Aorta (tissue), 5 donors: ENCODE measurements at regions of chrX and their contacts with region 1.

Region 1: DNA sequence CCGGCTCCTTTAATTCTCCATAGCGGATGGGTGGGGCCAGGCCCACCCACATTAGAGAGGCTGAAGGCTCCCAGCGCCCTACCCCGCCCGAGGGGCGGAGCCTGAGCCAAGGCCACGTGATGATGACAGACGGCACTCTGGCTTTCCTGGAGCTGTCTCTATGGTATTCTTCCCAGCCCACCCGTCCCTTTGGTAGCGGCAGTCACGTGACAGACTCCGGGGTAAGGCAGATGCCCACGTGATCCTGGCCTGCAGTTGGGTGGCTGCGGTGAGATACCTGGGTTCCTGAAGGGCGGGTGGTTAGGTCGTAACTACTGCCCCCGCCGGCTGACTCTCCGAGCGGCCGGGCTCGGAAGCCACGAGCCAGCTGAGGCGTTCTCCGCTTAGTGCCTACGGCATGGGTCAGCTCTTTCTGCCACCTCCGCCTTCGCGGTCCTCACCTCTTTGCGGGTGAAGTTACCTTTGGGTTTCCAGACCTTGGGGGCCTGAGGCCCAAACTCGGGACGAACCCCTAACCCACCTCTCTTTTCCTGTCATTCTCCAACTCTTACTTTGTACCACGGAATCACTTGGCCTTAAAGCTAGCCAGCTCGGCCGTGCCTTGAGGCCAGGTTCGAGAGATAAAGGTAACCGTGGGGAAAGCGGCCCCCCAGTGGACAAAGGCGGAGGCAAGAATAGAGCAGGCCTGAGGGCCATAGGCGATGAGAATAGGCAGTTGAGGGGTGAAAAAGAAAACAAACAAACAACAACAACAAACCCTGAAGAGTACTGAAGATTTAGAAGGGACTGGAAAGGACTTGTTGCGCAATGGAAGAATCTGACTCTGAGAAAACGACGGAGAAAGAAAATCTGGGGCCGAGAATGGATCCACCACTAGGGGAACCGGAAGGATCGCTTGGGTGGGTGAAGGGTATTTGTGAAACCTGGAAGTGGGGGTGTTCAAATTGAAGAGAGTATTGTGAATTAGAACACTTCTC is at the start of gene RRAGB:
- DNase-seq: peak; percentile 95 to 96
- ATAC-seq: peak; percentile 99
- H3K4me3 ChIP-seq: peak within 1 kb of the TSS; percentile 9 to 39
- H3K27ac ChIP-seq: peak within 1 kb of the TSS in 1 of 2 donors; percentile 58
- H3K4me1 ChIP-seq: peaks cover 0 to 3% of the 10 kb centered on the region in 2 donors
- H3K27me3 ChIP-seq: no peaks in the 10 kb centered on the region
- total RNA-seq, gene RRAGB: 17.2 to 26.2 TPM

Region 2: DNA sequence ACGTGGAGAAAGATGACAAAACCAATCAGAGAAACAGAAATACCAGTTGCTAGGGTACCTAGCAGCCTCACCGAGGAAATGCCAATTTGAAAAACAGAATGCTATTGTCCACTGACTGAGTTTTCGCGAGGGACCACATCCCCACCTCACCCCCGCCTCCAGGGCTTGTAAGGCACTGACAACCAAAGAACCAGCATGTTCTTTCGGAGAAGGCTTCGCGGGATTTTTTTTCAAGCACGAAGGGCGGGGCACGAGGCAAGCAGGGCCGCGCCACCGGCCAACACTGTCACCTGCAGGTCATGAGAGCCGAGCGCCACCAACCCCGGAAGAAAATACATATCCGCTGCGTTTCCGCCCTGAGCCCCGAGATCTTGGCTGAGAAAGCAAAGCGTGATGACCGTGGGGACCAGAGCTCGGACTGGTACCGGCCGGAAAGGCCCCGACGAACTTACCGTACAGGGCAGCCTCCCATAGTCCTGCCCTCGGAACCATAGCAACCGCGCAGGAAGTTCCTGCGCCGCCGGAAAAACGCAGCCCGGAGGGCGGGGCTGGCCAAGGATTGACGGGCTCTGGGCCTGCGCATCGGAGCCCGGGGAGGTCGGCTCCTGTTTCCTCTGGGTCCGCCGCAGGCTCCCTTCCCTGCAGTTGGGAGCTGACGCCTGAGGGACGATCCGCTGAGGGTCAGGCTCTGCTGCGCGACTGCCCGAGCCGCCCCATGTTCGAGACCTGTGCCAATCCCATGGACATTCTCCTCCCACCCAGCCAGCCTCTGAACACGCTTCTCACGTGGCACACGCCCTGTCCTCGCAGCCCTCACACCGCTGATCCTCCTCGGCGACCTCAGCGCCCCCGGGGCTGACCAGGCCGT is 556.9 kb before region 1 on chrX:
- intact Hi-C with region 1: loop called in 1 of 2 experiments (anchors 10 kb)
- DNase-seq: peak; percentile 94 to 95
- ATAC-seq: peak; percentile 99
- H3K4me3 ChIP-seq: peak overlapping the region; percentile 28 to 29
- H3K27ac ChIP-seq: peak overlapping the region in 1 of 2 donors; percentile 58
- H3K4me1 ChIP-seq: no peaks in the 10 kb centered on the region
- H3K27me3 ChIP-seq: no peaks in the 10 kb centered on the region

Region 3: GRCh38 chrX:55451990-55452832 is 265.6 kb before region 1 on chrX and contains the start of gene MAGEH1:
- intact Hi-C with region 1: loop called (anchors 10 kb)
- DNase-seq: peak; percentile 91 to 92
- ATAC-seq: peak; percentile 93
- H3K4me3 ChIP-seq: peak within 1 kb of the TSS; percentile 79 to 97
- H3K27ac ChIP-seq: peak within 1 kb of the TSS in 1 of 2 donors; percentile 95
- H3K4me1 ChIP-seq: no peaks in the 10 kb centered on the region
- H3K27me3 ChIP-seq: no peaks in the 10 kb centered on the region
- total RNA-seq, gene MAGEH1: 32.3 to 37.2 TPM

Region 4: DNA sequence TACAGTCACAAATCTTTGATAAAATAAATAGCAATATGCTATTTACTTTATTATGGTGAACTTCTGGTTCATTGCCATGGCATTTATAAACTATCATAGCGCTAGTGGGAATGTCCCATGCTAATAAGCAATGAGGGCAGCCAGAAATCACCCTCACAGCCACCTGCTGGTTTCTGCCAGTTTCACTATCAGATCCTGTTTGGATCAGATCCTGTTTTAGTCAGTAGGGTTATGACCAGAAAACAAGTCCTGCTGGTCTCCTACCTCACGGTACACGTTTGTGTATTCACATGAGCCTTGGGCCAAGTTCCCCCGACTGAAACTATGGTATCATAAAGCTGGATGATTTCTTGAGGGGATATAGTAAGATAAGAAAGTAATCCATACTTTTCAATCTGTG is 77.0 kb before region 1 on chrX:
- intact Hi-C with region 1: loop called in 1 of 2 experiments (anchors 10 kb)
- DNase-seq: no peak
- ATAC-seq: no peak
- H3K4me3 ChIP-seq: no peak overlapping the region
- H3K27ac ChIP-seq: no peak overlapping the region
- H3K4me1 ChIP-seq: no peaks in the 10 kb centered on the region
- H3K27me3 ChIP-seq: no peaks in the 10 kb centered on the region

Region 5: DNA sequence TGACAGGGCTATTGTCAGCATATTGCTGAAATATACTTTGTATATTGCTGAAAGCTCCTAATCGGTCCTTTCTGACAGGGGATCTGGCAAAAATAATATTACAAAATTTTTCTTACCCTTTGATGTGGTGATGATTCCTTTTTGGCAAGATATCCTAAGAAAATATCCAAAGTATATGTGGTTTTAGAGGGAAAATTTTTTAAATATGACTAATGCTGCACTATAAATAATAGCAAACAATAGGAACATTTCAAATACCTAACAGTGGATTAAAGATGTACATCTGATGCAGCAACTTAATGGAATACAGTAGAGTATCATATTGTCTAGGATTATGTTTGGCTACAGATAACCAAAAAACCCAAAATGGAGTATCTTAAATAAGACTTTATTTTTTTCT is 49.3 kb after region 1 on chrX:
- intact Hi-C with region 1: no loop called
- DNase-seq: no peak
- ATAC-seq: no peak
- H3K4me3 ChIP-seq: no peak overlapping the region
- H3K27ac ChIP-seq: no peak overlapping the region
- H3K4me1 ChIP-seq: no peaks in the 10 kb centered on the region
- H3K27me3 ChIP-seq: no peaks in the 10 kb centered on the region

Region 6: DNA sequence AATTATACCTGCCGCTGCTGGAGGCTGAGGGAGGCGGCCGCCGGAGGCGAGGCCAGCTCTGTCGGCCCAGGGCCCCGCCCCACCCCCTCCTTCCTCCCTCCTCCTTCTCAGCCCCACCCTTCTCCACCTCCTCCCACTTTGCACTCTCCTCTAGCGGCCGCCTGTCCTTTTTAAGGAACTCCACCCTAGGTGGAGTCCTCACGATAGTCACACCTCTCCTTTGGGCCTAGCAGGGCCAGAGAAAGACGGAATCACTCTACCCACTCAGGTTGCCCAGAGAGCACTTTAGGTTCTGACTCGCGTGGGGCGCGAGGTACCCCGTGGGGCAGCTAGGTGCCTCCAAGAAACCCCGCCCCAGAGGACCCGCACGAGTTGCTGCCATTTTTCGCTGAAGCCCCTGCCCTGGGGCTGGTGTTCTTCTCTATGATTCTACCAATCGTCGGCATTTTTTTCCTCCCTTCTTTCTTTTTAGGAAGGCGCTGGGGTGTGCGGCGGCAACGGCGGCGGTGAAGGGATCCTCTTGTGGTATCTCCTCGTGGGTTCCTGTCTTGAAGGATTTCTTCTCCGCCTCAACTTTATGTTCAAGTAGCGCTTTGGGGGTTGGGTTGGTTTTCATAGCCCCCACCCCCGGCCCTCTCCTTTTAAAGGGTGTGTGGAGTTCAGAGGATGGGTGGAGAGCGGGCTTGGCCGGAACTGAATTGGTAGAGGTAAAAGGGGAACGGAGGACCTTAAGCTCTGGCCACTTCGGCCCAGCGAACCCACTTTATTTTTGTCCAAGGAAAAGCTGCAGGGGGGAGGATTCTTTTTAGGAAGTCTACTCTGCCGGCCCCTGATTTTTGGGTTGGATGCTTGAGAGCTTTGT is 514.6 kb after region 1 on chrX and contains the start of gene KLF8:
- intact Hi-C with region 1: loop called in 1 of 2 experiments (anchors 10 kb)
- DNase-seq: peak in 1 of 2 donors; percentile 59
- ATAC-seq: peak; percentile 81
- H3K4me3 ChIP-seq: peak within 1 kb of the TSS; percentile 43 to 82
- H3K27ac ChIP-seq: peak within 1 kb of the TSS in 1 of 2 donors; percentile 65
- H3K4me1 ChIP-seq: no peaks in the 10 kb centered on the region
- H3K27me3 ChIP-seq: no peaks in the 10 kb centered on the region
- total RNA-seq, gene KLF8: 23.6 to 28.3 TPM